ENCODE measurements at regions of chr6 and their contacts with region 1.

Region 1: DNA sequence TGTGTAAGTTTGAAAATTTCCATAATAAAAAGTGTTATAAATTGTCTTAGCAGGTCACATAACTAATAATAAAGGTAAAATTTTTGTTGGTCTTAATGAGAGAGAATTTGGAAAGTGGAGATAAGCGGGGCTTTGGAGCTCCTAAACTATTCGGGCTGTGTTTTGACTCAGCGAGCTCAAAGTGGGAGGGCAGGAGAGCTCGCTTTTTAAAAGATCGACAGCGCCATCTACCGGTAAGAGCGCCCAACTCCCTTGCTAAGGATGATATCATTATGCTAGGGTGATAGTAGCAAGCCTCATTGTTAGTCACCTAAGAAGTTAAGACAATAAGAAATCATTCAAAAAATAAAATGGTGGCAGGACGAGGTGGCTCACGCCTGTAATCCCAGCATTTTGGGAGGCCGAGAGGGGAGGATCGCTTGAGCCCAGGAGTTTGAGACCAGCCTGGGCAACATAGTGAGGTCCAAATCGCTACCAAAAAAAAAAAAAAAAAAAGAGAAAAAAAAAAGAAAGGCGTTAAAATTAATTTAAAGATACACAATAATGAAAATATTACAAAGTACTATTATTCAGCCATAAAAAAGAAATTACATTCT is 24.8 kb downstream of the C6orf15 start:
- DNase-seq: peak; percentile 95
- H3K4me3 Mint-ChIP-seq: no peak overlapping the region
- H3K27ac Mint-ChIP-seq: no peak overlapping the region
- H3K4me1 Mint-ChIP-seq: peaks cover 33% of the 10 kb centered on the region
- H3K27me3 Mint-ChIP-seq: no peaks in the 10 kb centered on the region
- CTCF ChIP-seq: peak; percentile 89

Region 2: DNA sequence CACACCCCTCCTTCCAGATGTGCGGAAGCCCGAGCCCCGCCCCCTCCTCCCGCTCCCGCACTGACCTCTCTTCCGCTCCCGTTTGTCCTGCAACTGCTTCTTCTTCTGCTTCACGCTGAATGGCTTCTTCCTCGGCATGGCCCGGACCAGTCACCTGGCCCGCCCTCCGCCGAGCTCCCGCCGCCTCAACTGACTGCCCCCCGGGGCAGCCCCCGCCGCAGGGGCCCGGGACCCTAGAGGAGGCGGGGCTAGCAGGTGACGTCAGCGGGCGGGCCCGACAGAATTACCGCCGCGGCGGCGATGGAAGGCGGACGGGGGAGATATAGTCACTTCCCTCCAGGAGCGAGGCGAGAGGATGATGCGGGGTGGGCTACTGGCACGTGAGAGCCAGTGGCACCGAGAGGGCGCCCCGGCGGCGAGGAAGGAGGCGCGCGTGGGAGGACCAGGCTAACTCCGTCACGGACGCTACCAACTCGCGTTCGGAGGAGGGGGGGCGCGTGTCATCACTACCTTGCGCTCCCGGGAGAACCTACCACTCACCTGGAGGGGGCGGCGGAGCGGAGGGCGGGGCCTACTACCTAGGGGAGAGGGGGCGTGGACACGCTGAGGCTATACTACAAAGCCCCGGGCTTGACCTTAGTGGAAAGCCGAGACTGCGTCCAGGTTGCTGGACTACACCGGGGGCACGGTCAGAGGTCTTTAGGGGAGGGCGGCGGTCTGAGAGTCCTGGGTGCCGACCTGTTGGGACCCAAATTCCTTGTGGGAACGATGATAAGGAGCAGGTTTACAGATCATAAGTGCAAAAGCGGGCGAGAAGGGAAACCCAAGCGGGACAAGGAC is 531.3 kb before region 1 on chr6 and contains the start of gene GNL1:
- CTCF ChIA-PET with region 1: no interaction called
- intact Hi-C with region 1: no loop called
- DNase-seq: peak; percentile 99
- H3K4me3 Mint-ChIP-seq: peak within 1 kb of the TSS; percentile 91
- H3K27ac Mint-ChIP-seq: peak within 1 kb of the TSS; percentile 97
- H3K4me1 Mint-ChIP-seq: peaks cover 25% of the 10 kb centered on the region
- H3K27me3 Mint-ChIP-seq: no peaks in the 10 kb centered on the region
- CTCF ChIP-seq: no peak
- total RNA-seq, gene GNL1: 68.4 and 81.3 TPM in 2 replicates

Region 3: GRCh38 chr6:30730601-30731435 is 356.8 kb before region 1 on chr6:
- CTCF ChIA-PET with region 1: no interaction called
- intact Hi-C with region 1: loop called (anchors 5 kb)
- DNase-seq: peak; percentile 95
- H3K4me3 Mint-ChIP-seq: peak overlapping the region; percentile 66
- H3K27ac Mint-ChIP-seq: peak overlapping the region; percentile 98
- H3K4me1 Mint-ChIP-seq: peaks cover 22% of the 10 kb centered on the region
- H3K27me3 Mint-ChIP-seq: no peaks in the 10 kb centered on the region
- CTCF ChIP-seq: peak; percentile 84

Region 4: GRCh38 chr6:30914076-30914853 is 173.3 kb before region 1 on chr6 and contains the start of gene VARS2:
- CTCF ChIA-PET with region 1: interaction called, 68 read pairs
- intact Hi-C with region 1: no loop called
- DNase-seq: peak; percentile 100
- H3K4me3 Mint-ChIP-seq: peak within 1 kb of the TSS; percentile 78
- H3K27ac Mint-ChIP-seq: peak within 1 kb of the TSS; percentile 71
- H3K4me1 Mint-ChIP-seq: peaks cover 21% of the 10 kb centered on the region
- H3K27me3 Mint-ChIP-seq: no peaks in the 10 kb centered on the region
- CTCF ChIP-seq: peak; percentile 41
- total RNA-seq, gene VARS2: 33.0 and 34.2 TPM in 2 replicates

Region 5: DNA sequence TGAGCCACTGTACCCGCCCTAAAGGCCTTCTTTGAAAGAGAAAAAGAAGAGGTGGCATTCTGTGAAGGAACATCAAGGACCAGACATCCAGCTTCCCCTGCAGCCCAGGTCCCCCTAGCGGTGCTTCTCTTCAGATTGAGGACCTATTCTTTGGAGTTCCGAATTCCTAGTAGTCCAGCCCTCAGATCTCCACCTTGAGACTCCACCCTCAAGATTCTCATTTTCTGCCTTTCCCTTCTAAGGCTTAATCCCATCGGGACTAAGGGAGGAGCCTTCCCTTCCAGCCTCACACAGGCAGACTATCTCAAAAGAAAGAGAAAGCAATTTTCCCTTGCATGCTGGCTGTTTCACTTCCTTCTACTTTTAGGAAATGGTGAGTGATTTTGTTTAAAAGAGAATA is 44.8 kb before region 1 on chr6:
- CTCF ChIA-PET with region 1: interaction called, 9 read pairs
- intact Hi-C with region 1: loop called (anchors 1 kb)
- DNase-seq: peak; percentile 82
- H3K4me3 Mint-ChIP-seq: no peak overlapping the region
- H3K27ac Mint-ChIP-seq: peak overlapping the region; percentile 14
- H3K4me1 Mint-ChIP-seq: peaks cover 31% of the 10 kb centered on the region
- H3K27me3 Mint-ChIP-seq: peaks cover 12% of the 10 kb centered on the region
- CTCF ChIP-seq: peak; percentile 85

Region 6: GRCh38 chr6:31114970-31115849 is 27.6 kb after region 1 on chr6:
- CTCF ChIA-PET with region 1: interaction called, 57 read pairs
- intact Hi-C with region 1: loop called (anchors 2 kb)
- DNase-seq: peak; percentile 73
- H3K4me3 Mint-ChIP-seq: peak overlapping the region; percentile 58
- H3K27ac Mint-ChIP-seq: peak overlapping the region; percentile 87
- H3K4me1 Mint-ChIP-seq: peaks cover 44% of the 10 kb centered on the region
- H3K27me3 Mint-ChIP-seq: peaks cover 6% of the 10 kb centered on the region
- CTCF ChIP-seq: peak; percentile 47

Measured in Calu3 (cell line).